Ascending aorta (tissue), 2 donors: ENCODE measurements at regions of chr5 and their contacts with region 1.

Region 1: GRCh38 chr5:73201547-73202513 is 28.8 kb downstream of the TMEM174 start:
- DNase-seq: peak in 1 of 2 donors; percentile 76
- H3K4me3 ChIP-seq: peak overlapping the region in 1 of 2 donors; percentile 23
- H3K27ac ChIP-seq: no peak overlapping the region
- H3K4me1 ChIP-seq: no peaks in the 10 kb centered on the region
- H3K27me3 ChIP-seq: no peaks in the 10 kb centered on the region
- CTCF ChIP-seq: peak; percentile 63 to 90 (median 84)

Region 2: GRCh38 chr5:73081093-73081492 is 120.7 kb before region 1 on chr5:
- intact Hi-C with region 1: loop called (anchors 5 kb)
- DNase-seq: no peak
- H3K4me3 ChIP-seq: no peak overlapping the region
- H3K27ac ChIP-seq: no peak overlapping the region
- H3K4me1 ChIP-seq: no peaks in the 10 kb centered on the region
- H3K27me3 ChIP-seq: no peaks in the 10 kb centered on the region
- CTCF ChIP-seq: no peak